ENCODE measurements at regions of chr9 and their contacts with region 1.

Region 1: GRCh38 chr9:121686930-121687541 is 35.6 kb downstream of the DAB2IP start:
- DNase-seq: peak; percentile 78 to 94
- ATAC-seq: peak; percentile 65
- H3K4me3 ChIP-seq: no peak overlapping the region
- H3K27ac ChIP-seq: no peak overlapping the region
- H3K4me1 ChIP-seq: no peaks in the 10 kb centered on the region
- H3K27me3 ChIP-seq: no peaks in the 10 kb centered on the region

Region 2: DNA sequence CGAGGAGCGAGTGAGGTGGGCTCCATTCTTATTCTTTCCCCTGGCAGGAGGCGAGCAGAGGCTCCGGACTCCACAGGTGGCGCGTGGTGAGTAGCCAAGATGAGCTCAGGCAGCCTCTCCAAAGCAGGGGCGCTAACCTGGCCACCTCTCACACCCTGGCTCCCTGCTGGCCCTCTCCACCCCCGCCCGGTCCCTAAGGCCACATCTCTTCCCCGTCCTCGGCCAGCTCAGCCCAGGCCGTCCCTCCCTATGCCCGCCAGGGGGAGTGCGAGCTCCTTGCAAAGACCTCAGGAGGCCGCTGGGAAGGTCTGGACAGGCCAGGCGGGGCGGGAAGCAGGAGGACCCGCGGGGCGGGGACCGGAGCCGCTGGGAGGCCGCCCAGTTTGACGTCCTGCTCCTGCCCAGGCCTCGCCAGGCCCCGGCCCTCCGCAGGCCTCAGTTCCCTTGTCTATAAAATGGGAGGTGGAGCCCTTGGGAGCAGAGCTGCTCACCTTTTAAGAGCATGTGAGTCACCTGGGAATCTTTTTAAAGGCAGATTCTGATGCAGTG is 141.1 kb before region 1 on chr9:
- intact Hi-C with region 1: loop called (anchors 1 to 5 kb)
- DNase-seq: peak; percentile 98 to 99
- ATAC-seq: peak; percentile 96
- H3K4me3 ChIP-seq: no peak overlapping the region
- H3K27ac ChIP-seq: no peak overlapping the region
- H3K4me1 ChIP-seq: no peaks in the 10 kb centered on the region
- H3K27me3 ChIP-seq: no peaks in the 10 kb centered on the region

Region 3: DNA sequence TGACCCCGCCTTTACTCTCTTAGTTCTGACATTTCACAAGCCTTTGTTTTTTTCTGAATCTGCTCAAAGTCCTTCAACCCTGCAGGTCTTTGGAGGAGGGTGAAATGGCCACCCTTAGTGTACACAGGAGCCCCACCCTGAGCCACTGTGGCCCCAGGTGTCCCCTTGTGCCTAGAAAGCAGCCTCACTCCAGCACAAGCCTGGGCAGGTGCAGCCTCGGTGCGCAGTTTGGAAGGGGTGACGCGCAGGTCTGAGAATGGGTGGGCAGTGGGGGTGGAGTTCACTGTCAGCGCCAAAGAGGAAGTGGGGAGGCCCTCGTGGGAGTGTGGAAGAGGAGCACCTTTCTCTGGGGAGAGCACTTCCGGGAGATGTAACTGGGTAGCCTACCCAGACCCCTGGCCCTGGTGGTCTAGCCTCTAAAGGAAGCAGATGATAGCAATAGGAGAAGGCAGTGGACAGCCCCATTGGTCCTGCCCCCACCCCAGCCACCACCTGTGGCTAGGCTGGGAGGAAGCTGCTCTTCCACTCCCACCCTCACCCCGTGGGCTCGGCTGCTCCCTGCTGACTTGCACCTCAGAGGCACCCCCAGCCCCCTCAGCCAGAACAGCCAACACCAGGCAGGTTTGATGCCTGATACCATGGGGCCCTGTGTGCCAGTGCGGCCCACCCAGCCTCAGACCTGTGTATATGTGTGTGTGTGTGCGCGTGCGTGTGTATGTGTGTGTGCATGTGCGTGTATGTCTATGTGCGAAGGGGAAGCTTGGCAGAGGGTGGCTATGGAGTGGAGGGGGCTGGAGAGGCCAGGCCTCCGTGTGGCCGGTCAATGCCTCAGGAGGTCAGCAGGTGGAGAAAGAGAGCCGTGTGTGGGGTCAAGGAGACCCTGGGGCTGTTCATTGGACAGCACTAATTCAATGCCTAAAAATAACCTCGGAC is 52.4 kb before region 1 on chr9:
- intact Hi-C with region 1: loop called in 1 of 2 experiments (anchors 10 kb)
- DNase-seq: no peak
- ATAC-seq: no peak
- H3K4me3 ChIP-seq: no peak overlapping the region
- H3K27ac ChIP-seq: no peak overlapping the region
- H3K4me1 ChIP-seq: no peaks in the 10 kb centered on the region
- H3K27me3 ChIP-seq: no peaks in the 10 kb centered on the region

Region 4: DNA sequence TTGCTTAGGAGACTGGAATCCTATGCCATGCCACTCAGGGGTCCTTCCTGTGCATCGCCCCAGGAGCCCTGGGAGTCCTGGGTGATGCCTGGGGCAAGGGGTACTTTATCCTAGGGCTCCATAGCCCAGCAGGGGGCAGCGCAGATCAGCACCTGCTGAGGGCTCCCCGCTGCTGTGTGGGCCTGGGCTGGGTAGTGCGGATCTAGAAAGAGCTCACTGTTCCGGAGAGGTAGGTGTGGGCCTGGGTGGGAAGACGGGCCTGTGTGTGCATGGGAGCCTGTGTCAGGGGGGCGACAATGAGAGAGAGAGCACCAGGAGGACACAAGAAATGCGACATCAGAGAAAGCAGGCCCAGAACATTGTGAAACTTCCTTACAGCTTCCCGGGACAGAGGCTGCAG is 47.0 kb before region 1 on chr9:
- intact Hi-C with region 1: loop called (anchors 5 to 10 kb)
- DNase-seq: peak; percentile 60 to 87
- ATAC-seq: peak; percentile 53
- H3K4me3 ChIP-seq: no peak overlapping the region
- H3K27ac ChIP-seq: no peak overlapping the region
- H3K4me1 ChIP-seq: no peaks in the 10 kb centered on the region
- H3K27me3 ChIP-seq: no peaks in the 10 kb centered on the region

Region 5: DNA sequence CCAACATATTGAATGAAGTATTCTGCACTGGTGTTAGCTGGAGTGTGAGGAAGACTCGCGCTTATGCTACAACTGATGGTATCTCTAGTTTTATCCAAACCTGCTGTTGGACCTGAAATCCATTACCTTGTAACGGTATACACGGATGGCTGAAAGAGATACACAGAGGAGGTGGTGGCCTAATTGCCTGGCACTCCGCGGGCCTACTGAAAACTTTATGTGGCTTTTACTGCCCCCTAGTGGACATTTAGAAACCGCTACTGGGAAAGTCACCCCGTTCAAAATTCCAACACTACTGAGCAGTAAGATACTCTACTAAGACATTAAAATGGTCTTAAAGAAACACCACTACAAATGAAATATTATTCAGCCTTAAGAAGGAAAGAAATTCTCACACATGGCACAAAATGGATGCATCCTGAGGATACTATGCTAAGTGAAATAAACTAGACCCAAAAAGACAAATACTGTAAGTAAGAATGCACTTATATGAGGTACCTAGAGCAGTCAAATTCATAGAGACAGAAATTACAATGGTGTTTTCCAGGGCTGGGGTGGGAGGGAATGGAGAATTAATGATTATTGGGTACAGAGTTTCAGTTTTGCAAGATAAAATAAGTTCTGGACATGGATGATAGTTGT is 305.7 kb after region 1 on chr9:
- intact Hi-C with region 1: loop called (anchors 2 to 5 kb)
- DNase-seq: peak in 1 of 2 donors; percentile 55
- ATAC-seq: peak; percentile 71
- H3K4me3 ChIP-seq: no peak overlapping the region
- H3K27ac ChIP-seq: no peak overlapping the region
- H3K4me1 ChIP-seq: no peaks in the 10 kb centered on the region
- H3K27me3 ChIP-seq: no peaks in the 10 kb centered on the region

Region 6: GRCh38 chr9:122180651-122181050 is 493.6 kb after region 1 on chr9:
- intact Hi-C with region 1: no loop called
- DNase-seq: no peak
- ATAC-seq: no peak
- H3K4me3 ChIP-seq: no peak overlapping the region
- H3K27ac ChIP-seq: no peak overlapping the region
- H3K4me1 ChIP-seq: no peaks in the 10 kb centered on the region
- H3K27me3 ChIP-seq: no peaks in the 10 kb centered on the region